Cardiac septum (tissue), 1 donor: ENCODE measurements at regions of chrX and their contacts with region 1.

Region 1: DNA sequence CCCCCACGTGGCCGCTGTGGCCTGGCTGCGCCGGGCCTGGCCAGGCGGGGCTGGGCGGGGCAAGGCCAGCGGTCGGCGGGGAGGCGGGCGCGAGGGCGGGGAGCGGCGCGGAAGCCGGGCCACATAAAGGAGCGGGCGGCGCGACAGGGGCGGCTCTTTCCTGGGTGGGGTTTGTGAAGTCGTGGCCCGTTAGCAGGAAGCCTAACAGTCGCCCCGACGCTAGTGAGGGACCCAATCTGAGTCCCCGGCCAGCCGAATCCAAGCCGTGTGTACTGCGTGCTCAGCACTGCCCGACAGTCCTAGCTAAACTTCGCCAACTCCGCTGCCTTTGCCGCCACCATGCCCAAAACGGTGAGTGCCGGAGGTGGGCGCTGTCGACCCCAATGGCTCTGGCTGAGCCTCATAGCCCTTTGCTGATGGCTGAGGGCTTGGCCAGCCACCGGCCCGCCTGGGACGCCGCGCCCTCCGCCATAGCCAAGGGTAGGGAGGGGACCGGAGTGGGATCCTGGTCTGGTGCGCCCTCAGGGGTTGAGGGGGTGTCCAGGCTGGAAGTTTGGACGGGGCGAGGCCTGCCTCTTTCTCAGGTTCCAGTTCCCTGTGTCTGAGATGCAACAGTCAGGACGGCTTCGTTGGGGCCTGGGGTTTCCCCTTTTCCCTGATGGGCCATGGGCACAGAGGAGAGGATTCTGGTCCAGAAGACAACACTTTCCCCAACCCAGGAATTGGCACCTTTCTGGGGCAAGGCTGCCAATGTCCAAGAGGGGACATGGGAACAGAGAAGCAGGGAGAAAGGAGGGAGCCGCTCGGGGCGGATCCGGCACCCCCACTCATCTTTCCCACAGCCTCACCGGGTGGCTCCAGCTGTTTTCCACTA is at the start of gene MSN:
- DNase-seq: peak; percentile 95
- total RNA-seq, gene MSN: 177 TPM

Region 2: DNA sequence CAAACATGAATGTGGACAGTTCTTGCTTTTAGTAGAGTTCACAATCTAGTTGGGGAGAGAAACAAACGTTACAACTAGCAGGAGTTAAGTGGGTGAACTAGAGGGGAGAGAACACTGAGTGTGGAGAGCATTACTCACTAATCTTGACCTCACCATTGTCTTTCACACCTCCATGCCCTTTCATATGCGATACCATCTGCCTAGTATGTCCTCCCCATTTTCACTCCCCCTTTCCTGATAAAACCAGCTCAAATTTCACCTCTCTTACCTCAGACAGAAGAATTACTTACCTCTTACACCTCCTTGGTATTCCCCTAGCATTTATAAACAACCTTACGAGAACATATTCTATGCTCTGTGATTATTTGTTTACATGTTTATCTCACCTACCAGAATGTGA is 186.8 kb before region 1 on chrX:
- intact Hi-C with region 1: no loop called
- DNase-seq: no peak

Region 3: GRCh38 chrX:65595460-65595876 is 72.3 kb before region 1 on chrX:
- intact Hi-C with region 1: loop called (anchors 2 kb)
- DNase-seq: peak; percentile 96

Region 4: GRCh38 chrX:65644621-65645270 is 23.0 kb before region 1 on chrX:
- intact Hi-C with region 1: loop called (anchors 2 kb)
- DNase-seq: peak; percentile 91

Region 5: DNA sequence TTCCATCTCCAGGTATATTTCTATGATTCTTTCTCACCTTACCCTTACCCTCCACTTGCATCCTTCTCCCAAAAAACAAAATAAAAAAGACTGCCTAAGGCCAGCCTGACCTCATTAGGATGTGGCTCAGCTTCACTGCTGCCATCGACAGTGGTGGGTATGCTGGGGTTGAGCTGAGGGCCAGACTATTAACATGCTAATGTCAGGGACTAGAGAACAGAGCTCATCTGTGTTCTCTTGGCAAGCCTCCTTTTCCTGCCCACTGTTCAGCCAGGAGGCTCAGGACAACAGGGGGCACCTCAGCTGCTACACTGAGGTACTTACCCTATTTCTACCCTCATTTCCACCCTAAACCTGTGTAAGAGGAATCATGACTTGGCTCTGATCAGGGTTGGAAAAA is 59.0 kb after region 1 on chrX:
- intact Hi-C with region 1: no loop called
- DNase-seq: no peak